GM12878 (cell line): ENCODE measurements at regions of chr1 and their contacts with region 1.

Region 1: GRCh38 chr1:39189592-39190041 is 14.9 kb upstream of the MACF1 start:
- DNase-seq: no peak
- ATAC-seq: no peak
- H3K4me3 ChIP-seq: no peak overlapping the region
- H3K27ac ChIP-seq: no peak overlapping the region
- H3K4me1 ChIP-seq: peaks cover 35% of the 10 kb centered on the region
- H3K27me3 ChIP-seq: no peaks in the 10 kb centered on the region
- CTCF ChIP-seq: no peak
- EP300 ChIP-seq: no peak
- POLR2A ChIP-seq: no peak
- RAD21 ChIP-seq: no peak

Region 2: GRCh38 chr1:39091845-39092645 is 97.6 kb before region 1 on chr1:
- CTCF ChIA-PET with region 1: interaction called, 465 read pairs
- POLR2A ChIA-PET with region 1: interaction called, 3 read pairs
- RAD21 ChIA-PET with region 1: interaction called, 304 read pairs
- SMC1A ChIA-PET with region 1: interaction called, 164 read pairs
- in situ Hi-C with region 1: no loop called
- intact Hi-C with region 1: no loop called
- DNase-seq: no peak
- ATAC-seq: peak; percentile 89
- H3K4me3 ChIP-seq: no peak overlapping the region
- H3K27ac ChIP-seq: no peak overlapping the region
- H3K4me1 ChIP-seq: peaks cover 6% of the 10 kb centered on the region
- H3K27me3 ChIP-seq: no peaks in the 10 kb centered on the region
- CTCF ChIP-seq: peak; percentile 71 to 78 (median 78)
- EP300 ChIP-seq: no peak
- POLR2A ChIP-seq: no peak
- RAD21 ChIP-seq: peak; percentile 82

Region 3: DNA sequence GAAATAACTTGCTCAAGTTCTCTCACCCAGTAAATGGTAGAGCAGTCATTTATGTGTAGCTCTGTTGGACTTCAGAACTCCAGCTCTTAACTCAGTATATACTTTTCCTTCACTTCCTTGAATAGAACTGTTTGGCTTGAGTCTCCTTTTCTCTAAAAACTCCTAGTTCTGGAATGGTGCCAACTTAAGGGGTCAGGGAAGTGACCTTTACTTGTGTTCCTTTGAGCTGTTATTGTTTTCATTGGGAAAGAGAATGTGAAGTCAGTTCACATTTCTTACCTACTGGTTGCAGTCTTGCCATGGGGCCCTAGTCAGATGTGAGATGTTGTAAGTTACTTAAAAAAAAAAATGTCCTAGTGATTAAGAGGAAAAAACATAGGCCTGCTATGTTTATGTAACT is 62.1 kb before region 1 on chr1:
- CTCF ChIA-PET with region 1: interaction called, 48 read pairs
- POLR2A ChIA-PET with region 1: interaction called, 3 read pairs
- RAD21 ChIA-PET with region 1: interaction called, 21 read pairs
- SMC1A ChIA-PET with region 1: interaction called, 35 read pairs
- in situ Hi-C with region 1: no loop called
- intact Hi-C with region 1: no loop called
- DNase-seq: no peak
- ATAC-seq: no peak
- H3K4me3 ChIP-seq: no peak overlapping the region
- H3K27ac ChIP-seq: no peak overlapping the region
- H3K4me1 ChIP-seq: no peaks in the 10 kb centered on the region
- H3K27me3 ChIP-seq: no peaks in the 10 kb centered on the region
- CTCF ChIP-seq: no peak
- EP300 ChIP-seq: no peak
- POLR2A ChIP-seq: no peak
- RAD21 ChIP-seq: no peak

Region 4: GRCh38 chr1:39158327-39159086 is 31.1 kb before region 1 on chr1:
- CTCF ChIA-PET with region 1: interaction called, 48 read pairs
- POLR2A ChIA-PET with region 1: interaction called, 4 read pairs
- RAD21 ChIA-PET with region 1: interaction called, 27 read pairs
- SMC1A ChIA-PET with region 1: interaction called, 47 read pairs
- in situ Hi-C with region 1: no loop called
- intact Hi-C with region 1: no loop called
- DNase-seq: peak; percentile 37
- ATAC-seq: peak; percentile 88
- H3K4me3 ChIP-seq: no peak overlapping the region
- H3K27ac ChIP-seq: no peak overlapping the region
- H3K4me1 ChIP-seq: peaks cover 2% of the 10 kb centered on the region; the same call in 1 of the 2 replicates
- H3K27me3 ChIP-seq: no peaks in the 10 kb centered on the region
- CTCF ChIP-seq: no peak
- EP300 ChIP-seq: no peak
- POLR2A ChIP-seq: no peak
- RAD21 ChIP-seq: no peak

Region 5: DNA sequence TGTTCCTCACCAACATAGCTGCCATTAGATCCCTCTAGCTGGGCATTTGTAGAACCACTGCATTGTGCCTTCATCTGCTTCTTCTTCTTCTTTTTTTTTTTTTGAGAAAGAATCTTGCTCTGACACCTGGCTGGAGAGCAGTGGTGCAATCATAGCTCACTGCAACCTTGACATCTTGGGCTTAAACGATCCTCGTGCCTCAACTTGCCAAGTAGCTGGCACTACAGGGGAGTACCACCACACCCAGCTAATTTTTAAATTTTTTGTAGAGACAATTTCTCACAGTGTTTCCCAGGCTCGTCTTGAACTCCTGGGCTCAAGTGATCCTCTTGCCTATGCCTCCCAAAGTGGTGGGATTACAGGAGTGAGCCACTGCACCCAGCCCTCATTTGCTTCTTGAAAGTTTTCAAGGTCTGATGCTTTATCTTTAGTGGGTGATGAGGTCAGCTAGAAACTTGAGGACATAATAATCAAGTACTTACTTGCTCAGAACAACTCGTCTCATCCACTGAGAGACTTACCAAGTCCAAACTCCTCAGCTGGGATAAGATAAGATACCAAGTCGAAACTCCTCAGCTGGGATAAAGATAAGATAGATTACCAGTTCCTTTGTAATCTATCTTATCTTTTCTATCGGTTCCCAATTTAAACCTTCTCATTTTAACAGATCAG is 86.4 kb after region 1 on chr1:
- CTCF ChIA-PET with region 1: interaction called, 918 read pairs
- POLR2A ChIA-PET with region 1: interaction called, 5 read pairs
- RAD21 ChIA-PET with region 1: interaction called, 117 read pairs
- SMC1A ChIA-PET with region 1: interaction called, 155 read pairs
- in situ Hi-C with region 1: no loop called
- intact Hi-C with region 1: no loop called
- DNase-seq: no peak
- ATAC-seq: no peak
- H3K4me3 ChIP-seq: no peak overlapping the region
- H3K27ac ChIP-seq: no peak overlapping the region
- H3K4me1 ChIP-seq: peaks cover 21% of the 10 kb centered on the region
- H3K27me3 ChIP-seq: no peaks in the 10 kb centered on the region
- CTCF ChIP-seq: no peak
- EP300 ChIP-seq: no peak
- POLR2A ChIP-seq: no peak
- RAD21 ChIP-seq: no peak